Activated T-helper 1 cell treated with anti-CD3 and anti-CD28 coated beads, Interleukin-12 subunit alpha, Interleukin-12 subunit beta, Interleukin-2, Interleukin-4 antibody, amounts not matched to agents 30 ng/mL and 10 ng/mL and 1 ng/mL, durations not matched to agents 14 hours and 24 hours and 36 hours (primary cell): ENCODE measurements at regions of chr15 and their contacts with region 1.

Region 1: DNA sequence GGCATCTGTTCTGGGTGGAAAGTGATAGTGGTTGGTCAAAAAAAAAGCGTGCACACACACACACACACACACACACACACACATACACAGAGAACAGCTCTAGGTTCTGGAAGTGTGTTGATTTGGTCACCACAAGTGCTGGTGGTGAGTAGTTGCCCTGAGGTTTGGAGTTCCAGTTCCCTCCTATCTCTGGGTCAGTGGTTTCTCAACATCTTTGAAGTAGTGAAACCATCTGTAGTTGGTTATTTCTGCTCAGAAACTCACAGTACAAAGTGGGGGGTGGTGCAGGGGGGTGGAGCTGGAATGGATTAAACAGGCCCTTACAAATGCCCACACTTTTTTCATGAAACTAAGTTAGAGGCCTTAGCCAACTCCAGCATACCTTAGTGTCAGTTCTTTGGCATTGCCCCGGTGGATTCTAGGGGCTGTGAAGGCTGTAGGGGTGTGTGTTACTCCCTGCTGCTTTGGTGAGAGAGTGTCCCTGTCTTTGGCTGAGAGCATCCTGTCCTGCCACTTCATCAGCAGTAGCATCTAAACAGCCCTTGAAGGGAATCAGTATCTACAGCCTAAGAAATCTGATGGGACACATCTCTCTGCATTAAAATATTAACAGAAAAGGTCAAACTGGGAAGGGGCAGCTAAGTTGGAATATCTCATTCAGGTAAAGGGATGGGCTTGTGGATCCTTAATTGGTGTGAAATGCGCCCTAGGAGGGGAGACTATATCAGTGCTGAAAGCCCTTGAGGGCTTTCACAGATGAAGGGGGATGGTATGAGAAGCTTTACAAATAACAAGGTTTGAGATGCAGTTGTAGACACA is 20.6 kb downstream of the SMAD3 start:
- DNase-seq: peak; percentile 40
- H3K4me3 Mint-ChIP-seq: peak overlapping the region; percentile 72
- H3K27ac Mint-ChIP-seq: peak overlapping the region; percentile 98
- H3K4me1 Mint-ChIP-seq: peaks cover 100% of the 10 kb centered on the region
- H3K27me3 Mint-ChIP-seq: no peaks in the 10 kb centered on the region

Region 2: GRCh38 chr15:66946578-66947164 is 139.4 kb before region 1 on chr15:
- intact Hi-C with region 1: loop called (anchors 2 kb)
- DNase-seq: peak; percentile 64
- H3K4me3 Mint-ChIP-seq: no peak overlapping the region
- H3K27ac Mint-ChIP-seq: no peak overlapping the region
- H3K4me1 Mint-ChIP-seq: peaks cover 24% of the 10 kb centered on the region
- H3K27me3 Mint-ChIP-seq: peaks cover 5% of the 10 kb centered on the region

Region 3: GRCh38 chr15:67065444-67066093 is 20.5 kb before region 1 on chr15 and contains the start of gene SMAD3:
- intact Hi-C with region 1: loop called (anchors 1 kb)
- DNase-seq: peak; percentile 81
- H3K4me3 Mint-ChIP-seq: peak within 1 kb of the TSS; percentile 100
- H3K27ac Mint-ChIP-seq: peak within 1 kb of the TSS; percentile 95
- H3K4me1 Mint-ChIP-seq: peaks cover 65% of the 10 kb centered on the region
- H3K27me3 Mint-ChIP-seq: peaks cover 3% of the 10 kb centered on the region
- total RNA-seq, gene SMAD3: 80.2 and 80.4 TPM in 2 replicates

Region 4: GRCh38 chr15:67101911-67102598 is 16.0 kb after region 1 on chr15:
- intact Hi-C with region 1: loop called (anchors 1 kb)
- DNase-seq: peak; percentile 64
- H3K4me3 Mint-ChIP-seq: no peak overlapping the region
- H3K27ac Mint-ChIP-seq: no peak overlapping the region
- H3K4me1 Mint-ChIP-seq: peaks cover 51% of the 10 kb centered on the region
- H3K27me3 Mint-ChIP-seq: no peaks in the 10 kb centered on the region

Region 5: DNA sequence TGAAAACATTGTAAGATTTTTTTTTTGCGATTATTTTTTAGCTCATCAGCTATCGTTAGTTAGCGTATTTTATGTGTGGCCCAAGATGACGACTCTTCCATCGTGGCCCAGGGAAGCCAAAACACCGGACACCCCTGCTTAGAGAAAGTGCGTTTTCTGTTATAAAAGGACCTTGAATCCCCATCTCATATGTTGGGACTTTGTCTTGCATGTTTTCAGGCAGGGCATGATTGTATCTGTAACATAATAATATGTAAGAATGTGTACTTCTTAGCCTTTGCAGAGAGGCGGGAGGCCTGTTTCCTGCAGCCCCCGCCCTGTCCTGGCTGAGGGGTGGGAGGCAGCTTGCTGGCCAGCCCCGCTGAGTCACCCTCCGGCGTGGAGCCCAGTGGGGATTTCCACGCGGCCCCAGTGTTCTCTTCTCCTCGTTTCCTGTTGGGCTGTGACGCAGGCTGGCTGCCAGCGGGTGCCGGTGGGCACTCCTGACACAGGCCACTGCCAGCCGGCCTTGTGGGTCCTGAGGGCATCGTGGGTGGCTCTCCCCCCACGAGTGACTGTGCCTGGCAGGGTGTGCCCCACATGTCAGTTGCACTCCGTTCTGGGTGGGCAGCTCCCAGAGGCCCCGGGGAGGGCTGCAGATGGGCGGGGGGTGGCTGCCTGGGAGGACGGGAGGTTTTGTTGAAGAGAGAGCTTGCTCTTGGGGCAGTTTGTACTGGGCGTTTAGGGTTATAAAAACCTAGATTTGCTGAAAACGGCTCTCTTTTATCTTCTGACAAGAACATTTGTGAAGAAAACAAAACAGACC is 35.0 kb after region 1 on chr15:
- intact Hi-C with region 1: loop called (anchors 1 kb)
- DNase-seq: peak; percentile 88
- H3K4me3 Mint-ChIP-seq: peak overlapping the region; percentile 84
- H3K27ac Mint-ChIP-seq: peak overlapping the region; percentile 97
- H3K4me1 Mint-ChIP-seq: peaks cover 95% of the 10 kb centered on the region
- H3K27me3 Mint-ChIP-seq: no peaks in the 10 kb centered on the region

Region 6: GRCh38 chr15:67150028-67150860 is 64.2 kb after region 1 on chr15:
- intact Hi-C with region 1: loop called (anchors 1 kb)
- DNase-seq: peak; percentile 21
- H3K4me3 Mint-ChIP-seq: peak overlapping the region; percentile 48
- H3K27ac Mint-ChIP-seq: peak overlapping the region; percentile 91
- H3K4me1 Mint-ChIP-seq: peaks cover 80% of the 10 kb centered on the region
- H3K27me3 Mint-ChIP-seq: no peaks in the 10 kb centered on the region

Region 7: DNA sequence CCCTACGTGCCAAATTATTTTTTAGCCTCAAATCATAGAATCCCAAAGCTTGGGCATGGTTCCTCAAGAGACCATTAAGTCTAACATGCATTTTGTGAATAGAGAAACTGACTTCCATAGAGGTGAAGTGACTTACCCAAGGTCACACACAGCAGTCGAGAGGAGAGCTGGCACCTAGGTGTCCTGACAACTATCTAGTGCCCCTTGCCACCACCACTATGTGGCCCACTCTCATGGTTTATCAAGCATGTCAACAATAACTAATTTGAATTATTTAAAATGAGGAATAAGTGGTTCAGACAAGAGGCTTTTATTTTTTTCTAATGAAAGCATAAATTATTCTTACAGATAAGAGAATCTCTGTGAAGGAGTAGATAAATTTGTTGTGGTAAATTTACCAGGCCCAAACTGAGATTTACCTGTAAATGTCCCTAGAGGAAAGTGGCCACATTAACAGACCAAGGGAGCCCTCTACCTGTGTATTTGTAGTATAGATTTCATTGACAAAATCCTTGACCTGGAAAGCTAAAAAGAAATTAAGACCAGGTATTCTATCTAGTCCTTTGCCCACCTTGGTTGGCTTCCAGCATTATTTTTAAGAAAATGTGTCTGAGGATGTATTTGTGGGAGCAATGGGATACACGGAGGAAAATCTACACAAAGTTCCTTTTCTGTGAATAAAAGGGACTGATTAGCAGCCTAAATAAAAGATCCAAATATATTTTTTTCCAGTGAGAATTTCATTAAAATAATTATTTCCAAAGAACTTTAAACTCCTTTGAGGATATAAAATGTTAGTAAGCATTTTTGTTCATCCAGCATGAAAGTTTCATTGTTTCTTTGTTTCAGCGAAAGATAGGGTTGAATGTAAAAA is 217.7 kb after region 1 on chr15:
- intact Hi-C with region 1: loop called (anchors 1 kb)
- DNase-seq: no peak
- H3K4me3 Mint-ChIP-seq: no peak overlapping the region
- H3K27ac Mint-ChIP-seq: no peak overlapping the region
- H3K4me1 Mint-ChIP-seq: peaks cover 5% of the 10 kb centered on the region
- H3K27me3 Mint-ChIP-seq: peaks cover 5% of the 10 kb centered on the region

Region 8: DNA sequence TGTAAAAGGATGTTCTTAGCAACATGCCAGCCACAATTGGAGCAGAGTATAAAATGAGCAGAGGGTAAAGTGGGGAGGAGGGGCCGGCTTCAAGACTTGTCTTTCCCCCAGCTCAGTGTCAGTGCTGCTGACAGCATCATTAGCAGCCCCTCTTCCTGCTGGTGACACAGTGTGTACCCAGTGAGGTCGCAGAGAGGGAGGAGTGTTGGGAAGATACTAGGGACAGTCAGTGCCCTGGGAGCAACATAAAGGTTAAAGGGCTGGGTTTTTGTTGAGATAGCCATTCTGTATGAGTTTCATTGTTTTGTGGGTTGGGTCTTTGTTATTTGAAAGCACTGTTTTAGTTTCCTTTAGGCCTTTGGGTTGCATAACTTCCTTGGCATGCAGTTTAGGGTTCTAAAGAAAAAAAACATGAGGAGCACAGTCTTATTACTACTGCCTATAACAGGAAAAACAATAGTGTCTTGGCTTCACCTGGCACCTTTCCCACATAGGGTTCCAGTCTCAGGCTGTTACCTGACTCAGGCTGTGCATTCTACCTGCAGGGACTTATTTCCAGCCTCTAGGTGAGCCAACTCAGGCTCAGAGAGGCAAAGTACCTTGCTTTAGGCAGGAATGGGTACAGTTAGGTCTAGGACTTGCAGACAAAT is 645.2 kb after region 1 on chr15:
- intact Hi-C with region 1: no loop called
- DNase-seq: no peak
- H3K4me3 Mint-ChIP-seq: no peak overlapping the region
- H3K27ac Mint-ChIP-seq: no peak overlapping the region
- H3K4me1 Mint-ChIP-seq: peaks cover 13% of the 10 kb centered on the region
- H3K27me3 Mint-ChIP-seq: peaks cover 2% of the 10 kb centered on the region